HepG2 (cell line): ENCODE measurements at regions of chr17 and their contacts with region 1.

Region 1: GRCh38 chr17:70767102-70767701 is 597.9 kb downstream of the KCNJ2 start:
- DNase-seq: peak; percentile 31
- ATAC-seq: no peak
- H3K4me3 ChIP-seq: no peak overlapping the region
- H3K27ac ChIP-seq: no peak overlapping the region
- H3K4me1 ChIP-seq: no peaks in the 10 kb centered on the region
- H3K27me3 ChIP-seq: no peaks in the 10 kb centered on the region
- CTCF ChIP-seq: peak; percentile 61
- EP300 ChIP-seq: no peak
- POLR2A ChIP-seq: no peak
- RAD21 ChIP-seq: 0 out of 2 replicates have a peak, but pooled peaks have one; percentile 24

Region 2: GRCh38 chr17:70752972-70753467 is 14.2 kb before region 1 on chr17:
- CTCF ChIA-PET with region 1: no interaction called
- POLR2A ChIA-PET with region 1: no interaction called
- in situ Hi-C with region 1: no loop called
- intact Hi-C with region 1: no loop called
- DNase-seq: no peak
- ATAC-seq: no peak
- H3K4me3 ChIP-seq: no peak overlapping the region
- H3K27ac ChIP-seq: no peak overlapping the region
- H3K4me1 ChIP-seq: no peaks in the 10 kb centered on the region
- H3K27me3 ChIP-seq: no peaks in the 10 kb centered on the region
- CTCF ChIP-seq: no peak
- EP300 ChIP-seq: no peak
- POLR2A ChIP-seq: no peak
- RAD21 ChIP-seq: no peak

Region 3: DNA sequence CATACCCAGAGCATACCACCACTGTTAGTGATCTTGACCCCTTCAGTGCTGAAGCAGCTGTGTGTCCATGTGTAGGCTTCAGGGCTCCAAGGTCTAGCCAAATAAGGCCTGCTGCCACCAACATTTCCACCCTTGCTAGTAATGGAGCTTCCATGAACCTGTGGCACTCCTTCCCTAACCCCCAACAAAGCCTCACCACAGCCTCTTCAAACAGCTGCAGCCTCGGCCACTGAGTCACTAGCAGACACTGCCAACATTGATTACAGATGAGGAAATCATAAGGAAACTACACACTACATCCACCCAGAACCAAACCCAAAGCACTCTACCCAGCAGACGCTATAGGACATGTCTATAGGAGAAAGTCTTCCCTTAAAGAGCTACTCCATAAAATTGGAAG is 12.8 kb after region 1 on chr17:
- CTCF ChIA-PET with region 1: no interaction called
- POLR2A ChIA-PET with region 1: no interaction called
- in situ Hi-C with region 1: no loop called
- intact Hi-C with region 1: no loop called
- DNase-seq: no peak
- ATAC-seq: no peak
- H3K4me3 ChIP-seq: no peak overlapping the region
- H3K27ac ChIP-seq: no peak overlapping the region
- H3K4me1 ChIP-seq: no peaks in the 10 kb centered on the region
- H3K27me3 ChIP-seq: no peaks in the 10 kb centered on the region
- CTCF ChIP-seq: no peak
- EP300 ChIP-seq: no peak
- POLR2A ChIP-seq: no peak
- RAD21 ChIP-seq: no peak

Region 4: GRCh38 chr17:70929226-70929625 is 162.0 kb after region 1 on chr17:
- CTCF ChIA-PET with region 1: no interaction called
- POLR2A ChIA-PET with region 1: no interaction called
- in situ Hi-C with region 1: no loop called
- intact Hi-C with region 1: no loop called
- DNase-seq: no peak
- ATAC-seq: no peak
- H3K4me3 ChIP-seq: no peak overlapping the region
- H3K27ac ChIP-seq: no peak overlapping the region
- H3K4me1 ChIP-seq: no peaks in the 10 kb centered on the region
- H3K27me3 ChIP-seq: no peaks in the 10 kb centered on the region
- CTCF ChIP-seq: no peak
- EP300 ChIP-seq: no peak
- POLR2A ChIP-seq: no peak
- RAD21 ChIP-seq: no peak

Region 5: GRCh38 chr17:71084219-71084618 is 317.0 kb after region 1 on chr17:
- CTCF ChIA-PET with region 1: interaction called, 4 read pairs
- POLR2A ChIA-PET with region 1: no interaction called
- in situ Hi-C with region 1: no loop called
- intact Hi-C with region 1: loop called (anchors 1 kb)
- DNase-seq: peak; percentile 26
- ATAC-seq: peak; percentile 78
- H3K4me3 ChIP-seq: no peak overlapping the region
- H3K27ac ChIP-seq: no peak overlapping the region
- H3K4me1 ChIP-seq: no peaks in the 10 kb centered on the region
- H3K27me3 ChIP-seq: no peaks in the 10 kb centered on the region
- CTCF ChIP-seq: peak; percentile 66
- EP300 ChIP-seq: no peak
- POLR2A ChIP-seq: no peak
- RAD21 ChIP-seq: peak; percentile 35; the same call in 1 of the 2 replicates

Region 6: GRCh38 chr17:71180801-71181385 is 413.7 kb after region 1 on chr17:
- CTCF ChIA-PET with region 1: no interaction called
- POLR2A ChIA-PET with region 1: no interaction called
- in situ Hi-C with region 1: no loop called
- intact Hi-C with region 1: no loop called
- DNase-seq: no peak
- ATAC-seq: no peak
- H3K4me3 ChIP-seq: no peak overlapping the region
- H3K27ac ChIP-seq: no peak overlapping the region
- H3K4me1 ChIP-seq: no peaks in the 10 kb centered on the region
- H3K27me3 ChIP-seq: no peaks in the 10 kb centered on the region
- CTCF ChIP-seq: no peak
- EP300 ChIP-seq: no peak
- POLR2A ChIP-seq: no peak
- RAD21 ChIP-seq: no peak